PC-9 (cell line): ENCODE measurements at regions of chr19 and their contacts with region 1.

Region 1: DNA sequence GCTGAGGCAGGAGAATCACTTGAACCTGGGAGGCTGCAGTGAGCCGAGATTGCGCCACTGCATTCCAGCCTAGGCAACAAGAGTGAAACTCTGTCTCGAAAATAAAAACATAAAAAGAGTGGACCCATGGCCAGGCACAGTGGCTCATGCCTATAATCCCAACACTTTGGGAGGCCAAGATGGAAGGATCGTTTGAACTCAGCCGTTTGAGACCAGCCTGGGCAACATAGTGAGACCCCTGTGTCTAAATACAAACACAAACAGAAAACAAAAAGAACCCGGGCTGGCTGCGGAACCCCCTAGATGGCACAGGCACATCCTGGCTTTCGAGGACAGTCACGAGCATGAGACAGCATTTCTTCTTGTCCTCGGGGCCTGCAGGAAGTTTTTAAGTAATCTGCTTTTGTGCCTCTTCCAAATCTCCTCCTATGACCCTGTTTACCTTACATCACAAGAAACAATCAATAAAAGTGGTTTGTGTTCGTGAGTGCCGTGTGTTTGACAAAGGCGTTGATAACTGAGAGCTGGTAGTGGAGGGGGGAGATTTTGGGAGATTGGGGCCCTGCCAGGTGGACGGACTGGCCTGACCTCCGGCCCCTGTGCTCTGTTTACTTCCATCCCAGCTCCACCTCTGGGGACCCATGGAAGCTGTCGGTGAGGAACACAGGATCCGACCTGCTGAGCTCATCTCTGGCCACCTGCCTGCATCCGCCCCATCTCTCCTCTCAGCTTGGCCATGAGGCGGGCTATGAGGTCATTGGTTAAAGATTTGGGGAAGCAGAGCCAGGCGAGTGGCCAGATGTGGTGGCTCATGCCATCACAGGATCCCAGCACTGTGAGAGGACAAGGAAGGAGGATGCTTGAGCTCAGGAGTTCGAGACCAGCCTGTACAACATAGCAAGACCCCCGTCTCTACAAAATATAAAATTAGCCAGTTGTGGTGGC is 5.9 kb upstream of the GDF15 start:
- DNase-seq: peak; percentile 90 to 100
- H3K4me3 ChIP-seq: no peak overlapping the region
- H3K27ac ChIP-seq: peak overlapping the region; percentile 98
- H3K4me1 ChIP-seq: peaks cover 61% of the 10 kb centered on the region
- H3K27me3 ChIP-seq: no peaks in the 10 kb centered on the region
- CTCF ChIP-seq: no peak

Region 2: DNA sequence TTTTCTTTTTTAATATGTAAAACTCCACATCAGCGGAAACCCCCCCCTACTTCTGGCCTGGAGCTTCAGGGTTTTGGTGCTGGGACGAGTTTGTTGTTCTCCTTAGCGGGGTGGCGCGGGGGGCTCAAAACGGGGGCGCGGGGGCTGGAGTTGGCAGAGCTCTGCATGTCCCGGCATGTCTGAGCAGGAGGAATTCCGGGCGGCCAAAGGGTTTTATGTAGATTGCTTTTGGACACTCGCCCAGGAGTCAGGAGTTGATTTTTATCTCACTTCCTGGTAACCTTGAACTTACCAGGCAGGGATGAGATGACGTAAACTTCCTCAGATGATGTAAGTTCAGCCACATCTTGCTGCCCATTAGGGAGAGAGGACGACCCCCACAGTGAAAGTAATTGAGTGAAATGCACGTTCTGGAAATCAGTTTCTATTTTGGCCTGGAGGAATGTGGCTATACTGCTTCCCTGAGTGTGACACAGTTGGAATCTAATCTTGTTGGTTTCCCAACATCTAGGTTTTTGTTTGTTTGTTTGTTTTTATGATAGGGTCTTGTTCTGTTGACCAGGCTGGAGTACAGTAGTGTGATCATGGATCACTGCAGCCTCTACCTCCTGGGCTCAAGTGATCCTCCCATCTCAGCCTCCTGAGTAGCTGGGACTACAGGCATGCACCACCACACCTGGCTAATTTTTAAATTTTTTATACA is 15.1 kb before region 1 on chr19:
- CTCF ChIA-PET with region 1: no interaction called
- POLR2A ChIA-PET with region 1: no interaction called
- intact Hi-C with region 1: loop called (anchors 2 kb)
- DNase-seq: peak; percentile 79 to 100
- H3K4me3 ChIP-seq: peak overlapping the region; percentile 2; the same call in 1 of the 2 replicates
- H3K27ac ChIP-seq: peak overlapping the region; percentile 98
- H3K4me1 ChIP-seq: peaks cover 50% of the 10 kb centered on the region
- H3K27me3 ChIP-seq: no peaks in the 10 kb centered on the region
- CTCF ChIP-seq: no peak

Region 3: GRCh38 chr19:18450931-18451845 is 71.1 kb after region 1 on chr19:
- CTCF ChIA-PET with region 1: no interaction called
- POLR2A ChIA-PET with region 1: no interaction called
- intact Hi-C with region 1: no loop called
- DNase-seq: peak; percentile 54 to 83
- H3K4me3 ChIP-seq: no peak overlapping the region
- H3K27ac ChIP-seq: no peak overlapping the region
- H3K4me1 ChIP-seq: peaks cover 17% of the 10 kb centered on the region
- H3K27me3 ChIP-seq: no peaks in the 10 kb centered on the region
- CTCF ChIP-seq: peak; percentile 99

Region 4: DNA sequence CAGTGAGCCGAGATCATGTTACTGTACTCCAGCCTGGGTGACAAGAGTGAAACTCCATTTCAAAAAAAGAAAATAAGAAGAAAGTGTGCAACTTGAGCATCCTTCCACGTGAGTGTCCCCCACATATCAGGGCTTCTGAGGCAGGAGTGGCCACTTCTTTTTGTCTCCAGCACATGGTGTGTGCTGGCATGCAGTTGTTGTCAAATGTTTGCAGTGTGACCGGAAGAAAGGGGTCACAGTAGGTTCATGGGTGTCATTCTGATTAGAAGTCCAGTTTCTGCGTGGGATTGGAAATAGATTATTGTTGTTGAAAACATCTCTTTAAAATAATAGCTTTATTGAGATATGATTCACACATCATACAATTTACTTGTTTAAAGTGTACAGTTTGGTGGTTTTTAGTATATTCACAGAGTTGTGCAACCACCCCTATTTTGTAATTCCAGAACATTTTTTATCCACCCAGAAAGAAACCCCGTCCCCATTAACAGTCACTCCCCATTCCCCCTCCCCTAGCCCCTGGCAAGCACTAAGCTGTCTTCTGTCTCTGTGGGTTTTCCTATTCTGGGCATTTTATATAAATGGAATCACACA is 305.6 kb after region 1 on chr19:
- CTCF ChIA-PET with region 1: no interaction called
- POLR2A ChIA-PET with region 1: no interaction called
- intact Hi-C with region 1: no loop called
- DNase-seq: no peak
- H3K4me3 ChIP-seq: no peak overlapping the region
- H3K27ac ChIP-seq: no peak overlapping the region
- H3K4me1 ChIP-seq: peaks cover 22% of the 10 kb centered on the region
- H3K27me3 ChIP-seq: no peaks in the 10 kb centered on the region
- CTCF ChIP-seq: no peak